ENCODE measurements at regions of chr18 and their contacts with region 1.

Region 1: DNA sequence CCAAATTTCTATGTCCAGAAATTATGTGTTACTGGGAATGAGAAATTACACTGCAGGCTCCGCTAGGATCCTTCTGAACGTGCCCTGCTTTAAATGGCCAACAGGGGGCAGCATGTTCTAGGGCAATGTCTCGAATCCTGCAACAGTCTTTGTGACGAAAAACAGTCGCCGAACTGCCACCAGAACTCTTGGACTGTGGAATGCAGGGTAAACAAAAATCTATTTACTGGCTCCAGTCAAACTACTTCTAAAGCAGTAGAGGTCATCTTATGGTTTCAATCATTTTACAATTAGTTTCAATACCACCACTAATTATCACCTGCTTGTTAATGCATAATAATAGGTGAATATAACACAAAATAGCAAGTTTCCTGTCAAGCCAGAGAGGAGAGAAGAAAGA is 9.8 kb upstream of the ZNF397 start:
- DNase-seq: peak; percentile 67
- CTCF ChIP-seq: peak; percentile 79

Region 2: GRCh38 chr18:35343936-35344735 is 113.1 kb after region 1 on chr18 and contains the start of gene ZNF24:
- in situ Hi-C with region 1: loop called (anchors 10 kb)
- DNase-seq: peak; percentile 97
- CTCF ChIP-seq: no peak

Region 3: DNA sequence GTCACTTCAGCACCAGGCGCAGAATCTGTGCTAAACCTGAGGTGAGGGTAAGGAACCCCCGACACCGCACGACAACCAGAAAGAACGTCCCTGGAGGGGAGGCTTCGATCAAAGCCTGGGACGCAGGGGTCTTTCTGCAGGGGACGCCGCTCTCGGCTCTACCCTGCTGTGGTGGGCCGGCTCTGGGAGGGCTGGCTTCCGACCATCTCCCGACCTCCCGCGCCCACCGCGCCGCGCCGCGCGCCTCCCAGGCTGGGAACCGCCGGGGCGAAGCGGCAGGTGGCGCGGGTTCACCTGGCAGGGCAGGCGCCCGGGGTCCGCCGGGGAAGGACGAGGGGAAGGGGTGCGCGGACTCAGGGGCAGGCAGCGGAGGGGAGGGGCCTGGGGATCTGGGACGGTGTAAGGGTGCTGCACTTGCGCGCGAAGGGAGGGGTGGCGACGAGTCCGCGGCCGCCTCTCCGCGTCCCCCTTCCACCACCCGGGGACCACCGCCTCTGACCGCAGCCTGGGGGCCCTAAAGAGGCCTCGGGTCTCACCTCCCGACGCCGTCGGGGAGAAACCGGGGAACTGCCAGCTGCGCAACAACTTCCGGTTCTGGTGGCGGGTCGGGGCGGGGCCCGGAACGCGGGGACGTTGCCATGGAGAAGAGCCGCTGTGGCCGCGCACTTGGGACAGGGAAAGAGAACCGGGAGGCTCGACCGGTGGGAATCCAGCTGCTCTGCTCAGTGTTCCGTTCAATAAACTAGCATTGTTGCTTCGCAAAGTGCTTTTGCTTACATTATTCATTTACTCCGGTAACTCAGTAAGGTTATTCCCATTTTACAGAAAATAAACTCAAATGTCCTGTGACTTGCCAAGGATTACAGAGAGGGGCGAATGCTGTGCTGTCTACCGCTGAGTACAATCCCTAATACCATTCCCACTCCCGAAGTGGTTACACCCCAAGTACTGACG is 146.0 kb after region 1 on chr18 and contains the start of gene ZNF396:
- in situ Hi-C with region 1: loop called (anchors 10 kb)
- DNase-seq: peak; percentile 85
- CTCF ChIP-seq: no peak

Measured in GM13976 (cell line).